ENCODE measurements at regions of chr11 and their contacts with region 1.

Region 1: DNA sequence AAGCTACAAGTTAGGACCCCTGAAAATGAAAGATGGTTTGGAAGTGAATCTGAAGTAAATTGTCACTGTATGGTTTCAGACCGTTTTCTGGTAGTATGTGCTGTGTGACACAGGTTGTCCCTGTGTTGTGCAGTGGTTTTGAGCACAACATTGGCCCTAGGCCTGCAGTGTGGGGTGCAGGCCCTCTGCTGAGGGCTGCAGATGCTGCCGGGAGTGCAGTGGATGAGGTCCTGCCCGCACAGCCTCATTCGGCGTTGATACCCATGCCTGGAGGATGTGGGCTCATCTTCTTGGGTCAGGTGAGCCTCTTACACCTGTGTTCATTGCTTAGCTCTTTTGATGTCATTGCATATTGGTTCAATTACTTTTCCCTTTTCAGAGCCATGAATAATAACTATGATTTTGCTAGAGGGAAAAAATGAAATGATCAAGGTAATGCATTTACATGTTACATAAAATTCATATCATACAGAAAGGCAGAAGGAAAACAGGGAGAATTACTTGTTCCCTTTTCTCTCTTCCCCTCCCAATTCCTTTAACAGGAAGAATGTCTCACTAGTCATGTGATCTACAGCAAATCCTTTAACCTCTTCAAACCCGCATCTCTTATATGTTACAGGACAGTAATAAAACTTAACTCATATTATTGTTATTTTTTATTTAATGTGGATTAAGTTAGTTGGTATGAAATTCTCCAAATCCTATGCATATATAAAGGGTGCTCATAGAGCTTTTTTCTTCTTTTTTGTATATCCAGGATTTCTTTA is 48.7 kb downstream of the PTPRJ start:
- DNase-seq: peak in 6 of 9 donors; percentile 34 to 57 (median 46)
- ATAC-seq: peak; percentile 61
- H3K4me3 ChIP-seq: peak overlapping the region; percentile 3
- H3K4me3 Mint-ChIP-seq: peak overlapping the region in 9 of 10 donors; percentile 5 to 71 (median 63)
- H3K27ac ChIP-seq: peak overlapping the region; percentile 55
- H3K27ac Mint-ChIP-seq: peak overlapping the region; percentile 82 to 95 (median 90)
- H3K4me1 ChIP-seq: peaks cover 17 to 33% of the 10 kb centered on the region in 2 donors
- H3K4me1 Mint-ChIP-seq: peaks cover 40 to 80% (median 61%) of the 10 kb centered on the region in 7 donors
- H3K27me3 ChIP-seq: no peaks in the 10 kb centered on the region
- H3K27me3 Mint-ChIP-seq: no peaks in the 10 kb centered on the region

Region 2: DNA sequence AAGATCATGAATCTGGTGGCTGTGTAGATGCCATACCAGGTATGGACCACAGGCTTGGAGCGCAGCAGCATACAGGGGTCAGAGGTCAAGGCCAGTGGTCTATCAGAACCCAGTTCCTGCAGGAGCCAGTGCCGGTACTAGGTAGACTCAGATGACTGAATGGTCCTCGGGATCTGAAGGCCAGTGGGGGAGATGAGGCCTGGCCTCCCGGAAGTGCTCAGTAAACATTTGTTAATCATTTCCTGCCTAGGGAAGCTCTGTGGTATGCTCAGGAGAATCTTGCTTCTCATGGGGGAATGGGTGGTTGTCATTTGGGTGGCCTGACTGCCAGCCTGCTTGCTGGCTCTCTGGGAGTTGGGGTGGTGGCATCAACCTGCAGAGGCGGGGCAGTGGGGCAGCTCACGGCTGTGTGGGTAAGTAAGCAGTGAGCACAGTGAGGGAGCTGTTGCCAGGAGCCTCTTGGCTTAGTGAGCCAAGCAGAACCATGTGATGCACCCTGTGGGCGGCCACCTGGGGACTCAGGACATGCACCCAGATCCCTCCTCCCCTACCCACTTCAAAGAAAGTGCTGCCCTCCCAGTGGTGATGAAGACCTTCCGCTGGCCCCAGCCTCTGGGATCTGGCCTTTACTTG is 15.7 kb before region 1 on chr11:
- CTCF ChIA-PET with region 1: interaction called, 5 read pairs
- POLR2A ChIA-PET with region 1: interaction called, 10 read pairs
- intact Hi-C with region 1: loop called (anchors 2 kb)
- DNase-seq: peak in 1 of 9 donors; percentile 62
- ATAC-seq: peak; percentile 46
- H3K4me3 ChIP-seq: peak overlapping the region; percentile 20
- H3K4me3 Mint-ChIP-seq: peak overlapping the region in 9 of 10 donors; percentile 37 to 79 (median 63)
- H3K27ac ChIP-seq: peak overlapping the region; percentile 34
- H3K27ac Mint-ChIP-seq: peak overlapping the region; percentile 86 to 97 (median 90)
- H3K4me1 ChIP-seq: peaks cover 70 to 88% of the 10 kb centered on the region in 2 donors
- H3K4me1 Mint-ChIP-seq: peaks cover 58 to 89% (median 84%) of the 10 kb centered on the region in 7 donors
- H3K27me3 ChIP-seq: no peaks in the 10 kb centered on the region
- H3K27me3 Mint-ChIP-seq: no peaks in the 10 kb centered on the region